OCI-LY7 (cell line): ENCODE measurements at regions of chr1 and their contacts with region 1.

Region 1: GRCh38 chr1:52686830-52687229 is 11.3 kb downstream of the COA7 start:
- DNase-seq: no peak
- H3K4me3 ChIP-seq: no peak overlapping the region
- H3K27ac ChIP-seq: no peak overlapping the region
- H3K4me1 ChIP-seq: peaks cover 3% of the 10 kb centered on the region
- CTCF ChIP-seq: no peak

Region 2: DNA sequence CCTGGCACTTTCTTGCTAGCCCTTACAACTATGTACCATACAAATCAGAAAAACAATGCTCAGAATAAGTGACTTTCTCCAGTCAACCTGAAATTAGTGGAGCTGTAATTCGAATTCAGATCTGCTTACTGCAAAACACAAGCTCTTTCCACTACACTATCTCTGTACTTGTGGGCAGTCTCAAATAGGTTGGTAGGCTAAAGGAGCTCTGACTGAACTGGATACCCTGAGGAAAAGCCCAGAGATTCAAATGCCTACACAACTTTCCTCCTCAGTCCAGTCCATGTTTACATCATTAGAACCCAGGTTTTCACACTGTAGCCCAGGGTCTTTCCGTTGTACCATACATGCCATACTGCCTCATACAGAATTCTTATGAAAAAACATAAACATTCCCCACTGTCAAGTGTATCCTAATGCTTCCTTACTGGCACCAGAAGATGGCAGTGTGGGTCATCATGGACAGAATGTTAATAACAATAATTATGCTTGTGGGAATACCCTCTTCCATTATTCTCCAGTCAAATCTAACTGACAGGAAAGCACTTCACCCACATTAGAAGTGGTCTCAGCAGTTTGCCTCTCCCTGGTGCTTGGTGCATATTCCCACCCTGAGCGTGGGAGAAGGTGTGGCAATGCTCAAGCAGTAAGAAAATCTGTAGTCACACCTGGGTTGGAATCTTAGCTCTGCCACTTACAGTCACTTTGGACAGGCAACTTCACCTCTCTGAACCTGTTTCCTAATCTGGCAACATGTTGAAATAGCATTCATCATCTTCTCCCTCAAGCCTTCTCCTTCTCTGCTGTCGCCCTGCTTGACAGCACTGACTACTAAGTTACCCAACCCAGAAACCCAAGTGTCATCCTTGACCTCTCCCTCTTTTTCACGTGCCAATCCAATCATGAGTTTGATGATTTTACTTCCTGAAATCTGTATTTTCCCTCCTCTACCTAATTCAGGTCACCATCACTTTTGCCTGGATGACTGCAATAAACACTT is 559.3 kb before region 1 on chr1:
- CTCF ChIA-PET with region 1: no interaction called
- POLR2A ChIA-PET with region 1: no interaction called
- intact Hi-C with region 1: loop called (anchors 5 kb)
- DNase-seq: peak; percentile 43
- H3K4me3 ChIP-seq: no peak overlapping the region
- H3K27ac ChIP-seq: no peak overlapping the region
- H3K4me1 ChIP-seq: no peaks in the 10 kb centered on the region
- CTCF ChIP-seq: peak; percentile 81

Region 3: DNA sequence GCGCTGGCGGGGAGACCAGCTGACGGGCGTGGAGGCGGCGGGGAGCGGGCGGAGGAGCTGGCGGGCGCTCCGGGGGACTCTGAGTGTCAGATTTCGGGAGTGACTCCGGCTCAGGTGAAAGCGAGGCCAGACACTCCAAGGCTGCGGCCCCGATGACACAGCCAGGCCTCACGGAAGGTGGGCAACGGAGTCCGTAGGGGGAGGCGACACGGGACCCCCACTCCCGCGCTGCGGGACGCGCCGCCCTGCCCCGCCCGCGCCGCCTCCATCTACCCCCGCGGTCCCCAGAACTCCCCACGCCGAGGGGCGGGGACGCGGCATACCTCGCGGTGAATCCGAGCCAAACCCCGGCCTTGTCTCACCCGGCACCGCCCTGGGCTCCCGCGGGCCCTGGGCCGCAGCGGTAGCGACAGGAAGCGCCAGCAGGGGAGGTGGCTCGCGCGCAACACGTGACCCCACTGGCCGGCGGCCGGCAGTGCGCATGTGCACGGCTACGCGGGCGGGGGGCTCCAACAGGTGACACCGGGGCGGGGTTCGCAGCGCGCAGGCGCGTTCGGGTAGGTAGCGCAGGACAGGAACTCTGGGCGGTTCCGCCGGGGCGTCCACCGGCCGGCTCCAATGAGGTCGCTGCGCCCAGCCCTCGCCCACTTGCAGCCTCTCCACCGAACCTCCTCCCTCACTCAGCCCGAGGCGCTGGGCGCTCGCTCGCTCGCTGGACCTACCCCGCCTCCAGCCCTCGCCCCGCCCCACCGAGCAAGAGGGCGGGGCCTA is 320.9 kb before region 1 on chr1 and contains the start of gene CC2D1B:
- CTCF ChIA-PET with region 1: no interaction called
- POLR2A ChIA-PET with region 1: no interaction called
- intact Hi-C with region 1: loop called (anchors 1 kb)
- DNase-seq: peak; percentile 98
- H3K4me3 ChIP-seq: peak within 1 kb of the TSS; percentile 93
- H3K27ac ChIP-seq: peak within 1 kb of the TSS; percentile 63
- H3K4me1 ChIP-seq: peaks cover 15% of the 10 kb centered on the region
- CTCF ChIP-seq: no peak
- total RNA-seq, gene CC2D1B: 28.8 and 29.2 TPM in 2 replicates

Region 4: GRCh38 chr1:52636721-52637695 is 49.8 kb before region 1 on chr1:
- CTCF ChIA-PET with region 1: no interaction called
- POLR2A ChIA-PET with region 1: interaction called, 4 read pairs
- intact Hi-C with region 1: loop called (anchors 2 kb)
- DNase-seq: peak; percentile 96
- H3K4me3 ChIP-seq: peak overlapping the region; percentile 53
- H3K27ac ChIP-seq: peak overlapping the region; percentile 96
- H3K4me1 ChIP-seq: peaks cover 77% of the 10 kb centered on the region
- CTCF ChIP-seq: no peak